ENCODE measurements at regions of chr1 and their contacts with region 1.

Region 1: GRCh38 chr1:207004981-207005830 is 27.4 kb downstream of the C1orf116 start:
- DNase-seq: peak; percentile 77 to 88
- ATAC-seq: peak; percentile 79 to 90; a peak in 5 of 6 replicates
- H3K4me3 ChIP-seq: no peak overlapping the region
- H3K27ac ChIP-seq: peak overlapping the region; percentile 82 to 89
- H3K4me1 ChIP-seq: peaks cover 61% of the 10 kb centered on the region
- CTCF ChIP-seq: peak; percentile 63
- EP300 ChIP-seq: no peak
- POLR2A ChIP-seq: no peak
- RAD21 ChIP-seq: peak; percentile 35 to 54; a peak in 3 of 5 replicates

Region 2: GRCh38 chr1:206583707-206584648 is 421.2 kb before region 1 on chr1:
- CTCF ChIA-PET with region 1: no interaction called
- POLR2A ChIA-PET with region 1: no interaction called
- DNase-seq: peak; percentile 62 to 72
- ATAC-seq: peak; percentile 79 to 92
- H3K4me3 ChIP-seq: no peak overlapping the region
- H3K27ac ChIP-seq: no peak overlapping the region
- H3K4me1 ChIP-seq: no peaks in the 10 kb centered on the region
- CTCF ChIP-seq: peak; percentile 94
- EP300 ChIP-seq: no peak
- POLR2A ChIP-seq: no peak
- RAD21 ChIP-seq: peak; percentile 86 to 93

Region 3: GRCh38 chr1:206878456-206878855 is 126.8 kb before region 1 on chr1:
- CTCF ChIA-PET with region 1: no interaction called
- POLR2A ChIA-PET with region 1: no interaction called
- DNase-seq: peak in 1 of 2 experiments; percentile 27
- ATAC-seq: no peak
- H3K4me3 ChIP-seq: no peak overlapping the region
- H3K27ac ChIP-seq: no peak overlapping the region
- H3K4me1 ChIP-seq: no peaks in the 10 kb centered on the region
- CTCF ChIP-seq: no peak
- EP300 ChIP-seq: no peak
- POLR2A ChIP-seq: no peak
- RAD21 ChIP-seq: no peak

Region 4: DNA sequence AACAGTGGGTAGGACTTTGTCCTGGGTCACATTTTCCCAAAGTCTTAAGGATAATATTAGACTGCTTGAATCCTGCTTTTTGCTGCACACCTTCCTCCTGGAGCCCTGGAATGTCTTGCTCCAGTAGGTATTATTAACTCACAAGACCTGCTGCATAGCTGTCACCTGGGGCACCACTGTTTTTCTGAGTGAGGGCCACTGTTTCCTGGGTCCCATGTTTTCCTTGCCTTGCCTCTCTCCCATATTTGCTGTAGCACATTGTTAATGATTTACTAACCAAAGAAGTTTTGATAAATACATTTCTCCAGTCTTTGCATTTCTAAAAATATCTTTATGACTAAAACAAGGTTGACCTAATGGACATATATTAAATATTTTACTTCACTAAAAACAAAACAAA is 12.4 kb before region 1 on chr1:
- CTCF ChIA-PET with region 1: interaction called, 14 read pairs
- POLR2A ChIA-PET with region 1: no interaction called
- DNase-seq: no peak
- ATAC-seq: no peak; a peak in 1 of 6 replicates
- H3K4me3 ChIP-seq: no peak overlapping the region
- H3K27ac ChIP-seq: 0 out of 6 replicates have a peak overlapping the region, but pooled peaks of 1 of the 2 experiments have one; percentile 33
- H3K4me1 ChIP-seq: peaks cover 9% of the 10 kb centered on the region; the same call in 2 of the 3 replicates
- CTCF ChIP-seq: no peak
- EP300 ChIP-seq: no peak
- POLR2A ChIP-seq: no peak
- RAD21 ChIP-seq: no peak

Region 5: DNA sequence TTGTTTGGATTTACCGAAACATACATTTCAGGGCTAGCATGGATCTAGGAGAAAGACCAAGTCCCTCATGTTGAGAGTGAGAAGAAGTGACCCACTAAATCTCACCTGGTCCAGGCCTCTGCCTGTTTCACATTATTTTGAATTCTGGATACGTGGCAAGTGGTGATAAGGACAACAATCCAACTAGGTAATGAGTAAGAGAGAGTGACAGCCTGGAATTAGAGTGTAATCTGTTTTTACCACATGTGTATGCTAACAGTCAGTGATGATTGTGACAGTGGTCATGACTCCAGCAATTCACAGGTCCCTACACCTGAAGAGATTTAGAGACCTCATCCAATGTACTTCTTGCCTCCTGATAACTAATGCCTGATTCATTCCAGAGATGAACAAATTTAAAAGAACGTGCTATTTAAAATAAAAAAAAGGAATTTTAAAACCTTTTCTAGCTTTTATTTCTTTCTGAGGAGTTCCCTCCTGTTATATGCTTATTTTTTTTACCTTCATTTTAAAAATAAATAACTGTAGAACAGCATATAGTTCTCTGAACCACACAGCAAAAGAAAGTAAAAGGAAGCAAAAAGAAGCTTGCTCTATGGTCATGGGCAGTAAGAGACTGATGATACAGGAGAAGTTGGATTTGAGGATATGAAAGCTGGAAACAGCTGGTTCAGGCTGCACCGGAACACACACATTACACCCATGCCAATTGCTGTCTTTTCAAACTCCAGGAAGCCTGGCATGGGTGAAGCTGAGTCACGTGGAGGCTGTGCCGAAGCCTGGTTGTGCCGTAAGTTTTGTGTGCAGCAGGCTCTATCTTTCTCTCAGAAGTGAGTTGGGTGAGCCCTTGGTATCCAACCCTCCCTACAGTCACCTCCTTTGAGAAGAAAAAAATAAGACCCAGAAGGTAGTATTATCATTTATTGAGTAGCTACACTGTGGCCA is 12.7 kb after region 1 on chr1:
- CTCF ChIA-PET with region 1: interaction called, 17 read pairs
- POLR2A ChIA-PET with region 1: no interaction called
- DNase-seq: no peak
- ATAC-seq: no peak
- H3K4me3 ChIP-seq: no peak overlapping the region
- H3K27ac ChIP-seq: peak overlapping the region; percentile 86 to 89; a peak in 3 of 6 replicates
- H3K4me1 ChIP-seq: peaks cover 43% of the 10 kb centered on the region
- CTCF ChIP-seq: no peak
- EP300 ChIP-seq: no peak
- POLR2A ChIP-seq: no peak
- RAD21 ChIP-seq: no peak

Region 6: GRCh38 chr1:207025144-207025880 is 20.1 kb after region 1 on chr1:
- CTCF ChIA-PET with region 1: interaction called, 17 read pairs
- POLR2A ChIA-PET with region 1: interaction called, 4 read pairs
- DNase-seq: peak in 1 of 2 experiments; percentile 78
- ATAC-seq: peak; percentile 33 to 63; a peak in 5 of 6 replicates
- H3K4me3 ChIP-seq: peak overlapping the region; percentile 20; the same call in 1 of the 3 replicates
- H3K27ac ChIP-seq: peak overlapping the region; percentile 86 to 89
- H3K4me1 ChIP-seq: peaks cover 96% of the 10 kb centered on the region
- CTCF ChIP-seq: no peak
- EP300 ChIP-seq: peak; percentile 28 to 69; a peak in 3 of 5 replicates
- POLR2A ChIP-seq: no peak
- RAD21 ChIP-seq: peak in 1 of 2 experiments; percentile 20; a peak in 2 of 5 replicates

Region 7: GRCh38 chr1:207032528-207033017 is 27.4 kb after region 1 on chr1 and contains the start of gene C1orf116:
- CTCF ChIA-PET with region 1: interaction called, 15 read pairs
- POLR2A ChIA-PET with region 1: no interaction called
- DNase-seq: peak; percentile 67 to 76
- ATAC-seq: peak; percentile 54 to 70; a peak in 4 of 6 replicates
- H3K4me3 ChIP-seq: peak within 1 kb of the TSS; percentile 33
- H3K27ac ChIP-seq: peak within 1 kb of the TSS; percentile 86 to 89
- H3K4me1 ChIP-seq: peaks cover 76% of the 10 kb centered on the region
- CTCF ChIP-seq: no peak
- EP300 ChIP-seq: no peak
- POLR2A ChIP-seq: no peak
- RAD21 ChIP-seq: no peak; a peak in 1 of 5 replicates
- polyA plus RNA-seq, gene C1orf116: 2.0 and 2.2 TPM in 2 replicates